Activated naive CD4-positive, alpha-beta T cell treated with anti-CD3 and anti-CD28 coated beads for 36 hours (primary cell): ENCODE measurements at regions of chr6 and their contacts with region 1.

Region 1: DNA sequence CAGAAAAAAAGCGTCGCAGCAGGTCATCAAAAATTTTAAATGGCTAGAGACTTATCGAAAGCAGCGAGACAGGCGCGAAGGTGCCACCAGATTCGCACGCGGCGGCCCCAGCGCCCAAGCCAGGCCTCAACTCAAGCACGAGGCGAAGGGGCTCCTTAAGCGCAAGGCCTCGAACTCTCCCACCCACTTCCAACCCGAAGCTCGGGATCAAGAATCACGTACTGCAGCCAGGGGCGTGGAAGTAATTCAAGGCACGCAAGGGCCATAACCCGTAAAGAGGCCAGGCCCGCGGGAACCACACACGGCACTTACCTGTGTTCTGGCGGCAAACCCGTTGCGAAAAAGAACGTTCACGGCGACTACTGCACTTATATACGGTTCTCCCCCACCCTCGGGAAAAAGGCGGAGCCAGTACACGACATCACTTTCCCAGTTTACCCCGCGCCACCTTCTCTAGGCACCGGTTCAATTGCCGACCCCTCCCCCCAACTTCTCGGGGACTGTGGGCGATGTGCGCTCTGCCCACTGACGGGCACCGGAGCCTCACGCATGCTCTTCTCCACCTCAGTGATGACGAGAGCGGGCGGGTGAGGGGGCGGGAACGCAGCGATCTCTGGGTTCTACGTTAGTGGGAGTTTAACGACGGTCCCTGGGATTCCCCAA is at the start of gene EEF1A1:
- DNase-seq: peak; percentile 100
- H3K4me3 Mint-ChIP-seq: peak within 1 kb of the TSS; percentile 93
- H3K27ac Mint-ChIP-seq: peak within 1 kb of the TSS; percentile 99
- H3K4me1 Mint-ChIP-seq: peaks cover 33% of the 10 kb centered on the region
- H3K27me3 Mint-ChIP-seq: peaks cover 4% of the 10 kb centered on the region
- total RNA-seq, gene EEF1A1: 18,342 to 18,732 TPM

Region 2: GRCh38 chr6:73451223-73452107 is 69.4 kb before region 1 on chr6:
- CTCF ChIA-PET with region 1: interaction called, 4 read pairs
- intact Hi-C with region 1: loop called (anchors 1 kb)
- DNase-seq: peak; percentile 60
- H3K4me3 Mint-ChIP-seq: peak overlapping the region; percentile 90
- H3K27ac Mint-ChIP-seq: peak overlapping the region; percentile 86
- H3K4me1 Mint-ChIP-seq: peaks cover 35% of the 10 kb centered on the region
- H3K27me3 Mint-ChIP-seq: no peaks in the 10 kb centered on the region

Region 3: GRCh38 chr6:73542882-73543281 is 22.1 kb after region 1 on chr6:
- CTCF ChIA-PET with region 1: no interaction called
- intact Hi-C with region 1: no loop called
- DNase-seq: no peak
- H3K4me3 Mint-ChIP-seq: no peak overlapping the region
- H3K27ac Mint-ChIP-seq: no peak overlapping the region
- H3K4me1 Mint-ChIP-seq: no peaks in the 10 kb centered on the region
- H3K27me3 Mint-ChIP-seq: no peaks in the 10 kb centered on the region

Region 4: DNA sequence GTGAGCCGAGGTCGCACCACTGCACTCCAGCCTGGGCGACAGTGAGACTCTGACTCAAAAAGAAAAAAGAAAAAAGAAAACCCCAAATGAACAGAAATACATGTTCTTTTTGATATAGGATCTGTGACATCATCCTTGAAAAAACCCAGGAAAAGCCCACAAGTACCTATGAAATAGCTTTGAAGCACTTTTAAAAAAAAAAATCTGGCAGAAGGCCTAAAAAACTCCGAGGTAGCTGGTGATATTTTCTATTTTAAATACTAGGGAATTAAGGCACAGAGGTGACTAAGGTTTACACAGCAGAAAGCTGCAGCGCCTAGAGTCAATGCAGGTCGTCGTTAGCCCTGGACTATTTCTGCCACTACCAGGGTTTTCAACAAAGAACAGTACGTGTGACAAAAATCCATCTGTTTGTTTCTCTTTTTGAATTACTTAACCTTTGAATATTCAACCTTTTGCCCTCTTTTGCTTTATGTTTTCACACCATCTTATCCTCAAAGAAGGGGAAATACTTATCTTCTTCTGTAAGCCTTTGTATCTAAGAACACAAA is 39.4 kb after region 1 on chr6:
- CTCF ChIA-PET with region 1: no interaction called
- intact Hi-C with region 1: loop called (anchors 1 kb)
- DNase-seq: peak; percentile 21
- H3K4me3 Mint-ChIP-seq: no peak overlapping the region
- H3K27ac Mint-ChIP-seq: no peak overlapping the region
- H3K4me1 Mint-ChIP-seq: peaks cover 27% of the 10 kb centered on the region
- H3K27me3 Mint-ChIP-seq: no peaks in the 10 kb centered on the region

Region 5: DNA sequence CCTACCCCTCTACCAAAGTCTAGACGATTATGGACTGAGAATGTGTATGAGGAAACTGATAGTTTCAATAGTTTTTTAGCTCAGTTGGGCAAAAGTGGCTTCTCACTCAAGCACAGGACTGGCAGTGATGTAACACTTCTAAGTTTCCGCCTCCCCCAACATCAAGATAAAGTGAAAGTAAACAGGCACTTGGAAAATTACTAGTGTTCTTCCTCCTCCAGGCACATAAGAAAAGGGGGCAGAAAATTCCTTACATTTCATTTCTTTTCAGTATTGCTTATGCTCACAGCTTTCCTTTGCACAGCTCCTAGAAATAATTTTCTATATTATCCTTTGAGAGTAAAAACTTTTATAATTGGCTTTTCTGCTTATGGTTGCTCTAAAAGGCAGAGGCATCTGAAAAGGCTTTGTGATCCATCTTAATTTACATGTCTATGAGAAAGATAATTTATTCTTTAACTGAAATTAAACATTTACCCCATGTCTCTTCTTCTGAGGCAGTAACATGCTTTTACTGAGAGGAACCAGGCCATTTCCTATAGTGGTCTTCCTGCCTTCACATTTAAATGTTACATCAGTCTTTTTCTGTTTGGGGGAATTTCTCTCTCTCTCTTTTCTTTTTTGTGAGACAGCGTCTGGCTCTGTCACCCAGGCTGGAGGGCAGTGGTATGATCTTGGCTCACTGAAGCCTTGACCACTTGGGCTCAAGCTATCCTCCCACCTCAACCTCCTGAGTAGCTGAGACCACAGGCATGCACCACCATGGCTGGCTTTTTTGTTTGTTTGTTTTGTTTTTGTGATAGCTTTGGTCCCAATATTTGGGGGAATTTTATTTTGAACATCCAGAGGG is 65.0 kb after region 1 on chr6:
- CTCF ChIA-PET with region 1: interaction called, 10 read pairs
- intact Hi-C with region 1: loop called (anchors 1 kb)
- DNase-seq: peak; percentile 70
- H3K4me3 Mint-ChIP-seq: peak overlapping the region; percentile 78
- H3K27ac Mint-ChIP-seq: peak overlapping the region; percentile 99
- H3K4me1 Mint-ChIP-seq: peaks cover 36% of the 10 kb centered on the region
- H3K27me3 Mint-ChIP-seq: no peaks in the 10 kb centered on the region

Region 6: DNA sequence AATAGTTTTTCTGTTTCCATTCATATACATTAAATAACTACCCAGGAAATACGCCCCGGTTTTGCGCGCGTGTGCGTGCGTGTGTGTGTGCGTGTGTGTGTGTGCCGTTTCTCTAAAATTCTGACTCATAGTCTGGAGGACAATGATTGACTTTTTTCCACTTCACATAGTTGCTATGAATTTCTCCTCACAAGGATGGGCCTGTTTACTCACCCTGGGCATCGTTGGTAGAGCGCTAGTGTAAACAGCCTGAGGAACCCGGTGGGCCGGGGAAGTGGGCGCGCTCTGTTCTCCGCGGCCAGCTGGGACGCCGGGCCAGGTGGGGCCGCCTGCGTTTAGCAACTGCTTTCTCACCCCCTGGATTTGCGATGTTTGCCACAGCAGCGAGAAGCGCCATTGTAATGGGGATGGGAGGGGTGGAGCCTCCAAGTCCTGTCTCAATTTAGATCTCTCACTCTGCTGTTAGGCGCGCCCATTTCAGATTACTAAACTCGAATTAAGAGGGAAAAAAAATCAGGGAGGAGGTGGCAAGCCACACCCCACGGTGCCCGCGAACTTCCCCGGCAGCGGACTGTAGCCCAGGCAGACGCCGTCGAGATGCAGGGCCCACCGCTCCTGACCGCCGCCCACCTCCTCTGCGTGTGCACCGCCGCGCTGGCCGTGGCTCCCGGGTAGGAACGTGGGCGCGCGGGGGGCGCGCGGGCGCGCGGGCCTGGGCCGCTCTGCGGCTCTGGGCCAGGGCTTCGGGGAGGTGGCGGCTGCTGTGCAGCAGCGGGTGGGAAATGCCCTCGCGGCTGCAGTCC is 175.0 kb after region 1 on chr6 and contains the start of gene CD109:
- CTCF ChIA-PET with region 1: no interaction called
- intact Hi-C with region 1: loop called (anchors 1 kb)
- DNase-seq: peak; percentile 89
- H3K4me3 Mint-ChIP-seq: peak within 1 kb of the TSS; percentile 92
- H3K27ac Mint-ChIP-seq: peak within 1 kb of the TSS; percentile 96
- H3K4me1 Mint-ChIP-seq: peaks cover 44% of the 10 kb centered on the region
- H3K27me3 Mint-ChIP-seq: peaks cover 9% of the 10 kb centered on the region
- total RNA-seq, gene CD109: 6.7 to 7.6 TPM

Region 7: GRCh38 chr6:75243333-75244062 is 1722.7 kb after region 1 on chr6 and contains the start of gene COX7A2:
- CTCF ChIA-PET with region 1: no interaction called
- intact Hi-C with region 1: loop called (anchors 1 kb)
- DNase-seq: peak; percentile 92
- H3K4me3 Mint-ChIP-seq: peak within 1 kb of the TSS; percentile 98
- H3K27ac Mint-ChIP-seq: peak within 1 kb of the TSS; percentile 100
- H3K4me1 Mint-ChIP-seq: peaks cover 32% of the 10 kb centered on the region
- H3K27me3 Mint-ChIP-seq: peaks cover 12% of the 10 kb centered on the region
- total RNA-seq, gene COX7A2: 577 to 592 TPM